Activated CD4-positive, alpha-beta T cell treated with anti-CD3 and anti-CD28 coated beads for 36 hours (primary cell): ENCODE measurements at regions of chr4 and their contacts with region 1.

Region 1: GRCh38 chr4:83259586-83259985 is 25.0 kb downstream of the COQ2 start:
- DNase-seq: no peak
- ATAC-seq: no peak
- H3K4me3 Mint-ChIP-seq: no peak overlapping the region
- H3K27ac Mint-ChIP-seq: no peak overlapping the region
- H3K4me1 Mint-ChIP-seq: no peaks in the 10 kb centered on the region
- H3K27me3 Mint-ChIP-seq: no peaks in the 10 kb centered on the region

Region 2: GRCh38 chr4:82677321-82677720 is 582.3 kb before region 1 on chr4:
- CTCF ChIA-PET with region 1: no interaction called
- POLR2A ChIA-PET with region 1: no interaction called
- intact Hi-C with region 1: no loop called
- DNase-seq: no peak
- ATAC-seq: no peak
- H3K4me3 Mint-ChIP-seq: no peak overlapping the region
- H3K27ac Mint-ChIP-seq: no peak overlapping the region
- H3K4me1 Mint-ChIP-seq: no peaks in the 10 kb centered on the region
- H3K27me3 Mint-ChIP-seq: peaks cover 3% of the 10 kb centered on the region

Region 3: DNA sequence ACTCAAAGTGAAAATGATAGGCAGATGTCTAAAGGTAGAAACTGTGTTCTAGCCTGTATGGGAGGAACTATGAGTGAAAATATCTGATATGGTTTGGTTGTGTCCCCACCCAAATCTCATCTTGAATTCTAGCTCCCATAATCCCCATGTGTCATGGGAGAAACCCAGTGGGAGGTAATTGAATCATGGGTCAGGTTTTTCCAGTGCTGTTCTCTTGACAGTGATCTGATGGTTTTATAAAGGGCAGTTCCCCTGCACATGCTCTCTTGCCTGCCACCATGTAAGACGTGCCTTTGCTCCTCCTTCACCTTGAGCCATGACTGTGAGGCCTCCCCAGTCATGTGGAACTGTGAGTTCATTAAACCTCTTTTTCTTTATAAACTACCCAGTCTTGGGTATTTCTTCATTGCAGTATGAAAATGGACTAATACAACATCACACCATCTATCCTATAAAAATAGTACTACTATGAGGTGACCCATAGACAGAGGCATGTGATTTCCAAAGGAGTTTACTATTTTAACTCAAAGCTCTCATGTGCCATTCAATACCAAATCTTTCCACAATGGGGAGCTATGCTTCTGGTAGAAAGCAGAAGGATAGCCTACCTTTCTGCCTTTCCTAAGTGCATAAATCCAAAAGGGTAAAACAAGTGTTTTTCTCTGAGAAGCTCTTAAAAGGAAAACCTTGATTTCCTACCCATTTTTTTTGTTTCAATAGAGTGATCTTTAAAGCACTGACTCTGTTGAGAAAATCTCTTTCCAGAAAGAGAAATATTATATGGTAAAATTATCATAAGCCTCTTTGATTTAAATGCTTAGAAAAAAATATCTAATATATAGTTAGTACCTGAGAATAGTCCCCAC is 407.5 kb before region 1 on chr4:
- CTCF ChIA-PET with region 1: no interaction called
- POLR2A ChIA-PET with region 1: no interaction called
- intact Hi-C with region 1: loop called in 1 of 2 experiments (anchors 5 kb)
- DNase-seq: no peak
- ATAC-seq: peak; percentile 65
- H3K4me3 Mint-ChIP-seq: no peak overlapping the region
- H3K27ac Mint-ChIP-seq: peak overlapping the region; percentile 73
- H3K4me1 Mint-ChIP-seq: peaks cover 3% of the 10 kb centered on the region
- H3K27me3 Mint-ChIP-seq: no peaks in the 10 kb centered on the region